ENCODE measurements at regions of chrX and their contacts with region 1.

Region 1: DNA sequence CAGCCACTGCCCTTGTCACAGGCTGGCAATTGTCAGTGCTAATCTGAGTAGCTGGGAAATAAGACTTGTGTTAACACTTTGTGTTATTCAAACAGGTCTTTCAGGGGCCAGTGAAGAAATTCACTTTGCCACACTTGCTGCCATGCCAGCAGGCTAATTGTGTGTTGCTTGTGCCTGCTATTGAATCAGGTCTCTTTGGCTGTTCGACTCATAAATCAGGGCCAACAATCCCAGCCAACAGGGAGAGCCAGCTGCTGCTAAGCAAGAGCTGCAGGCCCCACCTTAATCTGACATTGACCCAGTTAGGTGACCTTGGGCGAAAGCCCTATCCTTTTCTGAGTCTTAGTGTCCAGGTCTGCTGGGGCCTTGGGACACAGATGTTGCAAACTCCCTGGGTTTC is 28.1 kb upstream of the MAMLD1 start:
- DNase-seq: no peak
- ATAC-seq: no peak
- H3K4me3 ChIP-seq: no peak overlapping the region
- H3K27ac ChIP-seq: no peak overlapping the region
- H3K4me1 ChIP-seq: peaks cover 0 to 5% (median 0%) of the 10 kb centered on the region in 9 donors
- H3K27me3 ChIP-seq: peaks cover 0 to 7% (median 0%) of the 10 kb centered on the region in 7 donors
- CTCF ChIP-seq: no peak

Region 2: DNA sequence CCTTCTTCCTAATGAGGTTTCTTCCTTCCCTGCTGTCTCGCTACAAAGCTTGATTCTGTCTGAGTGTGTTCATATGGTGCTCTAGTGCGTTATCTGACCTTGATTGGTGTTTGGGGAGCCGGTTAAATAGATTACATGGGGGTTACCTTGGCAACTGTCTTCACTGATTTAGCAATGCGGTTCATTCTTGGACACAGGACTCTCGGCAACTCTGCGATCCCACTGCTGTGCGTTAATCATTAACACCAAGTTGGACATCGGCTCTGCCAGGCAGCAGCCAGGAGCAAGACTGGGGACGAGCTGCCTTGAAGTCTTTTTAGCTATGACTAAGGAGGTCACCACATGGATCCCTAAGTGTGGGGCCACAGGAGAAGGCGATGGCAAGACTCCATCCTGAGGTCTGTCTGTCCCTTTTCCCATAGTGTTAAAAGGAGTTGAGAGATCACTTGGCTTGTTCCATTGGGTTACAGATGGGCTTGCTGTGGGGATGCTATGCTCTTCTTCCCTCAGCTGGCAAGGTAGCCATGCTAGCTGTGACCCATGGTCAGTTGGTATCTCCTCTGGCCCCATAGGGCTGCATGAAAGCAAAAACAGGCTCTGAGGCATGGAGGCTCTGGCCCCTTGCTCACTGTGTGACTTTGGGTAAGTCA is 65.3 kb before region 1 on chrX:
- intact Hi-C with region 1: loop called in 1 of 10 experiments (anchors 5 kb)
- DNase-seq: no peak
- ATAC-seq: no peak
- H3K4me3 ChIP-seq: no peak overlapping the region
- H3K27ac ChIP-seq: no peak overlapping the region
- H3K4me1 ChIP-seq: no peaks in the 10 kb centered on the region
- H3K27me3 ChIP-seq: peaks cover 0 to 7% (median 0%) of the 10 kb centered on the region in 7 donors
- CTCF ChIP-seq: no peak

Region 3: DNA sequence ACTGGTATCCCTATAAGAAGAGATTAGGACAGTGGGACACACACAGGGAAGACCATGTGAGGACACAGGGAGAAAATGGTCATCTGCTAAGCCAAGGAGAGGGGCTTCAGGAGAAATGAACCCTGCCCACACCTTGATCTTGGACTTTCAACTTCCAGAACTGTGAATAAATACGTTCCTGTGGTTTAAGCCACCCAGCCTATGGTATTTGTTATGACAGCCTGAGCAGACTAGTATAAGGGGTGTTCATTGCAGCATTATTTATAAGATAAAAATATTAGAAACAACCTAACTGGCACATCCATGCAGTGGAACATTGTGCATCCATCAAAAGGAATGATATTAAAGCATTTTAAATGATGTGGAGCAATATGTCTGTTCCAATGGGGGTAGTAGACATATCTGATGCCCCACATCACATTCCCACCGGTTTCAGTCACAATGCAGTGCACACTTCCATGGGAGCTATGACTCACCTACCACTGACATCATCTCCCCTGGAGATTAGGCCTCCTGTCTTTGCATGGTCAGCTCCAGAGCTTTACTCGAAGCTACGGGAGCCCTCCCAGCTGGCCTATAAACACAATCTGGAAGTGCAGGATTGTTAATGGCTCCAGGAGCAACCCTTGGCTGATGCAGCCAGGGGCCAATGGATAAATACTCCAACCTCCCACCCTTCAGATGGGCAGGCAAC is 10.8 kb before region 1 on chrX:
- intact Hi-C with region 1: no loop called
- DNase-seq: no peak
- ATAC-seq: peak in 1 of 8 donors; percentile 64
- H3K4me3 ChIP-seq: no peak overlapping the region
- H3K27ac ChIP-seq: no peak overlapping the region
- H3K4me1 ChIP-seq: peaks cover 0 to 4% (median 0%) of the 10 kb centered on the region in 9 donors
- H3K27me3 ChIP-seq: peaks cover 0 to 7% (median 0%) of the 10 kb centered on the region in 7 donors
- CTCF ChIP-seq: no peak

Region 4: GRCh38 chrX:150438165-150438564 is 103.2 kb after region 1 on chrX:
- intact Hi-C with region 1: no loop called
- DNase-seq: no peak
- ATAC-seq: no peak
- H3K4me3 ChIP-seq: no peak overlapping the region
- H3K27ac ChIP-seq: no peak overlapping the region
- H3K4me1 ChIP-seq: no peaks in the 10 kb centered on the region
- H3K27me3 ChIP-seq: peaks cover 0 to 6% (median 0%) of the 10 kb centered on the region in 7 donors
- CTCF ChIP-seq: no peak